MCF 10A (cell line): ENCODE measurements at regions of chr18 and their contacts with region 1.

Region 1: GRCh38 chr18:11310476-11311086 is 161.2 kb upstream of the PIEZO2 start:
- DNase-seq: peak; percentile 59
- H3K4me3 Mint-ChIP-seq: no peak overlapping the region
- H3K27ac Mint-ChIP-seq: no peak overlapping the region
- H3K4me1 Mint-ChIP-seq: peaks cover 7% of the 10 kb centered on the region
- H3K27me3 Mint-ChIP-seq: peaks cover 26% of the 10 kb centered on the region
- CTCF ChIP-seq: peak; percentile 78

Region 2: DNA sequence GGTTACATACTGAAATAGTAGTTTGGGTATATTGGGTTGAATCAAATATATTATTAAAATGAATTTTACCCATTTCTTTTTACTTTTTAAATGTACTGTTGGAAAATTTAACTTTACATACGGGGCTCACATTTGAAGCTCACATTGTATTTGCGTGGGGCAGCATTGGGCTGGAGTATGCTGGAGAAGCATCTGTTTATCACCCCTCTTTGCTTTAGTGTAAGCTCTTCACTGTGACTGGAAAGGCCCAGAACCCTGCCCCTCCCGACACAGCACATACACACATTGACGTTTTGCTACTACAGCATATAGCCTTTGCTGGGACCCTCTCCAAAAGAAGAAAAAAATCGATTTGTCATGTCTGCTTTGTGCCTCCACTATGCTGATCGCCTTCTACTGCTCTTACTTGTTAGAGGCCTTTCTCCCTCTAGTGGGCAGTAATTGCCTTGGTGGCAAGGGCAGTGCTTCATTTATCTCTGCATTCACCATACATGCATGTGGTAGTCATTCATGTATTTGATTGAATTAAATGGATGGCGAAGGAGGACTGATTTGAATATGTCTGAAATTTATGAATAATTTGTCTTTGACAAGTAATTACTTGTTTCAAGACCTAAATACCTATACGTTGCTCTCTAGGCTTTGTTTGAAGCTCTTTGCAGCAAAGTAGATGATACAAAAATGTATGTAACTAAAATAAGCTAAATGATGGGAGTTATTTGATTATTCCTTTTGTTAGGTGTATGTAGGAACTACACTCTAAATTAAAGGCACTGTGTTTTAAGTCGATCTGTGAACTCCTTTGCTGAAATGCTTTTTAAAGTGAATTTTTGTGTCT is 1359.3 kb before region 1 on chr18:
- CTCF ChIA-PET with region 1: no interaction called
- POLR2A ChIA-PET with region 1: no interaction called
- intact Hi-C with region 1: no loop called
- DNase-seq: peak; percentile 70
- H3K4me3 Mint-ChIP-seq: no peak overlapping the region
- H3K27ac Mint-ChIP-seq: peak overlapping the region; percentile 64
- H3K4me1 Mint-ChIP-seq: peaks cover 33% of the 10 kb centered on the region
- H3K27me3 Mint-ChIP-seq: no peaks in the 10 kb centered on the region
- CTCF ChIP-seq: peak; percentile 67

Region 3: DNA sequence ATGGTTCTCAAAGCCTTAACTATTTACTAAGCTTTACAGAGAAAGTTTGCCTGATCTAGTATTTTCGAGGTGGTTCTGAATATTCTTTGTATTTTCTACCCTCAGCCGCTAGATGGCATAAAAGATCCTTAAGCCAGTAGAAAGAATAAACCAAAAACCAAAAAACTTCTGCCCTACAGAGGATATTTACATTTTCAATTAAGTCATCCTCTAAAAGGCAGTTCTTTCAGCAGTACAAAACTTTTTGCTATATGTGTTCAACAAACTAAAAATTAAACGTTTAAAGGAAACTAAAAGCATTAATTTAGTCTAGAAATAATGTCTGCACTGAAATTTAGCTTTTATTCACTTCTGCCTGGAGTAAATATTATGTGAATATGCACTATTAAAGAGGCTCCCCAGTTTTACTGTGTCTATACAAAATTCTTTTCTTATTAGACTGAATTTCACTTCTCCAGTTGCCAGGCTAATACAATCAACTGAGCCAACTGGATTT is 458.7 kb before region 1 on chr18:
- CTCF ChIA-PET with region 1: interaction called, 3 read pairs
- POLR2A ChIA-PET with region 1: no interaction called
- intact Hi-C with region 1: loop called (anchors 2 kb)
- DNase-seq: peak; percentile 55
- H3K4me3 Mint-ChIP-seq: no peak overlapping the region
- H3K27ac Mint-ChIP-seq: no peak overlapping the region
- H3K4me1 Mint-ChIP-seq: peaks cover 6% of the 10 kb centered on the region
- H3K27me3 Mint-ChIP-seq: no peaks in the 10 kb centered on the region
- CTCF ChIP-seq: peak; percentile 69

Region 4: DNA sequence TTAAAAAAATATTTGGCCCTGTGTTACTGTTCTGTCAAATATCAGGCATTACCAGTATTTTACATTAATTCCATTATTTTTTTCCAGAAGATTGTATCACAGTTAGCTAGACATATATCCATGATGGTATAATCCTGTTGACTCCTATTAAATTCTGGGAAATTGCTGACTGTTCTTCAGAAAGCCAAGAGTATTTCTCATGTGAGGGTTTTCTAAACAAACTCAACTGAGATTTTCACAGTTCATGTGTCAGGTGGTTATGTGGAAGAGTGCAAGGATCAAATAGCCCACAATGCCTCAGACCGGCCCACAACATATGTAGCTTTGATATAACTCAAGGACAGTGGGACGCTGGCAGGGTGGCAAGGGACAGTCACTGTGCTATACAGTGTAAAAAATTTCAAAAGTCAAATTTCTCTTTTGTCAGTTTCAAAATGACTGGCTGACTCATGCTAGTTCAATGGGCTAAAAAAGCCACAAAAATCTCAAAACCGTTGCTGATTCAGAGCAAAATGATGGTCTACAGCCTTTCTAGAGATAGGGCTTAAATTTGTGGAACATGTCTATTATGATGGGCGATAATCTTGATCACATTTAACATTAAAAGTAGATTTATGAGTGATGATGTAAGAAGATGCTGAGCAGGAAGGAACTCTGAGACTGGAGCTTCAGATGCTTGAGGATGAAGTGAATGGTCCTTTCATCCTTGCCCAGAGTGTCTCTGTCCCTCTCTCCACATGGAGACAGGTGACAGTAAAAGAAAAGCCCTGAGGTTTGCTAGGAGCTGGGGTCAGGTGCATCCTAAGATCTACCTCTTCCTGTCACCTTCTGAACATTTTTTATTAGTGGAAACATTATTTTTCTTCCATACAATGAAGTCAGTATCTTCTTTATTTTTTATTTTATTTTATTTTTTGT is 14.6 kb after region 1 on chr18:
- CTCF ChIA-PET with region 1: interaction called, 18 read pairs
- POLR2A ChIA-PET with region 1: interaction called, 3 read pairs
- intact Hi-C with region 1: no loop called
- DNase-seq: peak; percentile 56
- H3K4me3 Mint-ChIP-seq: no peak overlapping the region
- H3K27ac Mint-ChIP-seq: no peak overlapping the region
- H3K4me1 Mint-ChIP-seq: peaks cover 17% of the 10 kb centered on the region
- H3K27me3 Mint-ChIP-seq: no peaks in the 10 kb centered on the region
- CTCF ChIP-seq: no peak

Region 5: DNA sequence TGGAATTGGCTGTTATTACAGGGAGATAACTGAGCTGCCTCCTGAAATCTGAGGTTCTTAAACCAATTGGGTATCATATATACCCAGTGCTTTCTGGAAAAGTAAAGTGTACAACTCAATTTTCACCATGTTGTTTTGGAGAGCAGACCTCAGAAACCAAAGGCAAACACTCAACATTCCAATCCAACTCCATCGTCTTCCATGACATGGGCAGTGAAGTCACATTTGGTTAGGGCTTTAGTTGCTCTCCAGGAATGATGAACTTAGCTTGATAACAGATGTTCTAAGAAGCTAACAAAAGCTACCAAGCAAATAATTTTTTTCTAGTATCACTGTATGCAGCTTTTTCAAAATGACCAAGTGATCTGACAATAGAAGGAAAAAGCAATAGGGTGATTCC is 191.8 kb after region 1 on chr18:
- CTCF ChIA-PET with region 1: interaction called, 19 read pairs
- POLR2A ChIA-PET with region 1: interaction called, 3 read pairs
- intact Hi-C with region 1: no loop called
- DNase-seq: no peak
- H3K4me3 Mint-ChIP-seq: no peak overlapping the region
- H3K27ac Mint-ChIP-seq: no peak overlapping the region
- H3K4me1 Mint-ChIP-seq: peaks cover 21% of the 10 kb centered on the region
- H3K27me3 Mint-ChIP-seq: peaks cover 11% of the 10 kb centered on the region
- CTCF ChIP-seq: no peak

Region 6: GRCh38 chr18:11518788-11519685 is 208.5 kb after region 1 on chr18:
- CTCF ChIA-PET with region 1: interaction called, 114 read pairs
- POLR2A ChIA-PET with region 1: no interaction called
- intact Hi-C with region 1: no loop called
- DNase-seq: peak; percentile 67
- H3K4me3 Mint-ChIP-seq: no peak overlapping the region
- H3K27ac Mint-ChIP-seq: no peak overlapping the region
- H3K4me1 Mint-ChIP-seq: peaks cover 15% of the 10 kb centered on the region
- H3K27me3 Mint-ChIP-seq: peaks cover 17% of the 10 kb centered on the region
- CTCF ChIP-seq: peak; percentile 60

Region 7: DNA sequence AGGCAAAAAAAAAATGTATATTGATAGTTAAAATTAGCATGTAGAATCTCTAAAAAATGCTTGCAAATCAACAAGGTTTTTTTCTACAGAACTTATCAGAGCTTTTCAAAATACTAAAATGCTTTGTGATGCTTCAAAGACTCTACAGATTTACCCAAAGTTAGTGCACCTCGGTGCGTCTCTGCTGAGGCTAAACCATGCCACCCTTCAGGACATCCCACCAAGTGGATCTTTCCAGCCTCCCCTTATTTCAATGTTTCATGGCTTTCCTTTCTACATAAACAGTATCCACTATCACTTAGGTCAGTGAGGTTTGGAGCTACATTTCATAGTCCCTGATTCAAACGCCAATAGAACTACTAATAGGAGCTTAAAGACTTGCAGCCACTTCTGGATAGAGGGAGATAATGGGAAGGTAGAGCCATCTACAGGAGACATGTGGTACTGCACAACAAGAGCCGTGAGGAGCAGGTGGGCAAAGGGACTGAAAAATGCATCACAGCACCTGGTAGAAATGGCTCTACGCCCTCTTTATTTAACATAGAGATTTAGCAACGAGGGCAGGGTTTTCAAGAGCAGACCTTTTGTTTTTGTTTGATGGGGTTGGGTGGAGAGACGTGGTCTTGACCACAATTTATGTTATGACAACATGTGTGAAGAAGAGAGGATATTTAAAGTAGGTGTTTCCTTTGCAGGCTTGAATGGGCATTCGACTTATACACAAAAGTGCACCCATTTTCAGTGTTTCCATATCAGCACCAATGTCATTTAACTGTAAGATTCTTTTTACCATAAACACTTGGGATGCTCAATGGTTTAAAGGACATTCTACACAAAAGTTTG is 242.7 kb after region 1 on chr18:
- CTCF ChIA-PET with region 1: interaction called, 51 read pairs
- POLR2A ChIA-PET with region 1: no interaction called
- intact Hi-C with region 1: loop called (anchors 5 kb)
- DNase-seq: peak; percentile 65
- H3K4me3 Mint-ChIP-seq: no peak overlapping the region
- H3K27ac Mint-ChIP-seq: no peak overlapping the region
- H3K4me1 Mint-ChIP-seq: no peaks in the 10 kb centered on the region
- H3K27me3 Mint-ChIP-seq: peaks cover 24% of the 10 kb centered on the region
- CTCF ChIP-seq: peak; percentile 80